Activated CD4-positive, alpha-beta T cell treated with anti-CD3 and anti-CD28 coated beads for 36 hours (primary cell): ENCODE measurements at regions of chr9 and their contacts with region 1.

Region 1: DNA sequence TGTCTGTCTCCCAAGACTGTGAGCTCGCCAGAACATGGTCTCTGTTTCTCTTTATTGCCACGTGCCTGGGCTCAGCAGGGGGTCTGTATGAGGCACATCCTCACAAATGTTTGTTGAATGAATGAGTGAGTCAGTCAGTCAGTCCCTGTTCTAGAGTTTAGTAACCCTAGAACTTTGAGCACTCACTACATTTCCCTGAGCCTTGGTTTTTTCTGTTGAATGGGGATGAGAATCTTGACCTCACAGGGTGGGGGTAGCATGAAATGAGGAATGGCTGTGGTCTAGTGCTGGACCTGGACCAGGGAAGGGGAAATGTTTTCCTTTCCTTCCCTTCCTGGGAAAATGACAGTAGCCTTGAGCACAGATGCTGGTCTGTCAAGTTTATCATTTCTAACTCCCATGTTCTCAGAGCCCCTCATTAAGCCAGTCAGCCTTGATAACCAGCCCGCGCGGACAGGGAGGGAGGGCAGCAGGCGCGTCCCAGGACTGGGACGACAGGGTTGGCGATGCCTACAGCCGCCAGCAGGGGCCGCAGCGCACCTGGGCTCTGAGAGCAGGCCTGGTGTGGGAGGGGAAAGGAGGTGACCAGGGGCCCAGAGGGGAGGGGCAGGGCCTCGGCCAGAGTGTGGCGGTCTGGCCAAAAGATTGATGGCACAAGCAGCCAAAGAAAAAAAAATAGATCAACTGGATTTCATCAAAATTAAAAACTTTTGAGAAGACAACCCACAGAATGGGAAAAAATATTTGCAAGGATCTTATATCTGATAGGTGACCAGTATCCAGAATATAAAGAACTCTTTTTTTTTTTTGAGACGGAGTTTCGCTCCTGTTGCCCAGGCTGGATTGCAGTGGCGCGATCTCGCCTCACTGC is 24.1 kb upstream of the WNK2 start:
- DNase-seq: peak; percentile 86
- ATAC-seq: peak; percentile 68
- H3K4me3 Mint-ChIP-seq: no peak overlapping the region
- H3K27ac Mint-ChIP-seq: no peak overlapping the region
- H3K4me1 Mint-ChIP-seq: peaks cover 26% of the 10 kb centered on the region
- H3K27me3 Mint-ChIP-seq: no peaks in the 10 kb centered on the region

Region 2: GRCh38 chr9:92616655-92617111 is 543.2 kb before region 1 on chr9:
- CTCF ChIA-PET with region 1: no interaction called
- POLR2A ChIA-PET with region 1: no interaction called
- intact Hi-C with region 1: no loop called
- DNase-seq: no peak
- ATAC-seq: no peak
- H3K4me3 Mint-ChIP-seq: no peak overlapping the region
- H3K27ac Mint-ChIP-seq: no peak overlapping the region
- H3K4me1 Mint-ChIP-seq: no peaks in the 10 kb centered on the region
- H3K27me3 Mint-ChIP-seq: no peaks in the 10 kb centered on the region

Region 3: DNA sequence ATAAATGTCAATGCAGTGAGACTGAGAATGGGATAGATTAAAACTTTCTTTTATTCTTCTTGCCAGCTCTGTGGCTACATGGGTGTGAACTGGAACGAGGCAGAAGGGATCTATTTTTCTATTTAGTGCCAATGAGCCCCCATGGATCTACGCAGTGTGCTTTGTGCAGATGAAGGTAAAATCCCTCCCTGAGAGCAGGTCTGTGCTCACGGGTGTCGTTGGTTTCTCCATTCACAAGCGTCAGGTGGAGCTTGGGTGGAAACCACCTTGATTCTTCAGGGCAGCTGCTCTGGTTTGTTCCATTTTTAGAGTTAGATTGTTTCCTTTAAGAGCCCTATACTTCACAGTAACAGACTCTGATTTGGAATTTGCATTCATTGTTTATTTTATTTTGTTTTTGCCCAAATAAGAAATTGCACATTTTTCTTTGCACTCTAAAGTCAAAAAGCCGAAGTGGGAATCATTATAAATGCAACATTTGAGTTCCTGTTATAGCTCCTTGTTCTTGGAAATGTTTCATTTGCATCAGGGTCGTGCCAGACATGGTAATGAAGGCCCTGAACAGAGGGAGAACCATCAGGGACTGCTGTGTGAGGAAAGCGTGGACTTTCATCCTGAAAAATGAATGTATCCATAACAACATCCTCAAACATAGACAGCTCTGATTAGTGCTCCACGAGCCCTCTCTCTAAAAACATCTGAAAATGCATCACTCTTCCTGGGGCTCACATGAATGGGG is 364.1 kb before region 1 on chr9:
- CTCF ChIA-PET with region 1: no interaction called
- POLR2A ChIA-PET with region 1: no interaction called
- intact Hi-C with region 1: no loop called
- DNase-seq: no peak
- ATAC-seq: no peak
- H3K4me3 Mint-ChIP-seq: no peak overlapping the region
- H3K27ac Mint-ChIP-seq: no peak overlapping the region
- H3K4me1 Mint-ChIP-seq: peaks cover 7% of the 10 kb centered on the region
- H3K27me3 Mint-ChIP-seq: peaks cover 17% of the 10 kb centered on the region

Region 4: DNA sequence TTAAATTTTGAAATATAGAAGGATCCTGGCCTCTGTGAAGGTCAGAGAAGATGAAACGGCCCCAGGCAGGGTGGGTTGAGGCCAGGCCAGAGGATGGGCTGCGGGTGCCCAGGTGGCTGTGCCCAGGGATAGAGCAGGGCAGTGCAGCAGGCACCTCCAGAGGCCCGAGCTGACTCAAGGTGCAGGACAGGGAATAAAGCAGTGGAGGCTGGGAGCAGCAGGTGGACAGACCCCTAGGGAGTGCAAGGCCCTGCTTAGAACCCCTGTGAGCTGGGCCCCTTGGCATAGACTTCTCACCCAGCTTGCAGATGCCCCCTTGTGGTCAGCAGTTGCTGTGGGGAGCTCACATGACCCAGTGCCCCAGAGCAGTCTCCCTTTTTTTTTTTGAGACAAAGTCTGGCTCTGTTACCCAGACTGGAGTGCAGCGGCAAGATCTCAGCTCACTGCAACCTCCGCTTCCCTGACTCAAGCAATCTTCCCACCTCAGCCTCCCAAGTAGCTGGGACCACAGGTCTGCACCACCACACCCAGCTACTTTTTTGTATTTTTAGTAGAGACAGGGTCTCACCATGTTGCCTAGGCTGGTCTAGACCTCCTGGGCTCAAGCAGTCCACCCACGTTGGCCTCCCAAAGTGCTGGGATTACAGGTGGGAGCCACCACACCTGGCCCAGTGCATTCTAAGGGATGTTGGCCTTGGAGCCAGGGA is 142.9 kb after region 1 on chr9:
- CTCF ChIA-PET with region 1: no interaction called
- POLR2A ChIA-PET with region 1: no interaction called
- intact Hi-C with region 1: loop called (anchors 1 kb)
- DNase-seq: peak; percentile 78
- ATAC-seq: peak; percentile 88
- H3K4me3 Mint-ChIP-seq: no peak overlapping the region
- H3K27ac Mint-ChIP-seq: no peak overlapping the region
- H3K4me1 Mint-ChIP-seq: no peaks in the 10 kb centered on the region
- H3K27me3 Mint-ChIP-seq: no peaks in the 10 kb centered on the region

Region 5: GRCh38 chr9:93427655-93428379 is 268.0 kb after region 1 on chr9:
- CTCF ChIA-PET with region 1: no interaction called
- POLR2A ChIA-PET with region 1: no interaction called
- intact Hi-C with region 1: loop called in 1 of 2 experiments (anchors 5 kb)
- DNase-seq: peak; percentile 36
- ATAC-seq: no peak
- H3K4me3 Mint-ChIP-seq: no peak overlapping the region
- H3K27ac Mint-ChIP-seq: no peak overlapping the region
- H3K4me1 Mint-ChIP-seq: no peaks in the 10 kb centered on the region
- H3K27me3 Mint-ChIP-seq: peaks cover 9% of the 10 kb centered on the region

Region 6: GRCh38 chr9:93814077-93814956 is 654.5 kb after region 1 on chr9:
- CTCF ChIA-PET with region 1: no interaction called
- POLR2A ChIA-PET with region 1: no interaction called
- intact Hi-C with region 1: no loop called
- DNase-seq: no peak
- ATAC-seq: no peak
- H3K4me3 Mint-ChIP-seq: no peak overlapping the region
- H3K27ac Mint-ChIP-seq: no peak overlapping the region
- H3K4me1 Mint-ChIP-seq: no peaks in the 10 kb centered on the region
- H3K27me3 Mint-ChIP-seq: peaks cover 25% of the 10 kb centered on the region

Region 7: DNA sequence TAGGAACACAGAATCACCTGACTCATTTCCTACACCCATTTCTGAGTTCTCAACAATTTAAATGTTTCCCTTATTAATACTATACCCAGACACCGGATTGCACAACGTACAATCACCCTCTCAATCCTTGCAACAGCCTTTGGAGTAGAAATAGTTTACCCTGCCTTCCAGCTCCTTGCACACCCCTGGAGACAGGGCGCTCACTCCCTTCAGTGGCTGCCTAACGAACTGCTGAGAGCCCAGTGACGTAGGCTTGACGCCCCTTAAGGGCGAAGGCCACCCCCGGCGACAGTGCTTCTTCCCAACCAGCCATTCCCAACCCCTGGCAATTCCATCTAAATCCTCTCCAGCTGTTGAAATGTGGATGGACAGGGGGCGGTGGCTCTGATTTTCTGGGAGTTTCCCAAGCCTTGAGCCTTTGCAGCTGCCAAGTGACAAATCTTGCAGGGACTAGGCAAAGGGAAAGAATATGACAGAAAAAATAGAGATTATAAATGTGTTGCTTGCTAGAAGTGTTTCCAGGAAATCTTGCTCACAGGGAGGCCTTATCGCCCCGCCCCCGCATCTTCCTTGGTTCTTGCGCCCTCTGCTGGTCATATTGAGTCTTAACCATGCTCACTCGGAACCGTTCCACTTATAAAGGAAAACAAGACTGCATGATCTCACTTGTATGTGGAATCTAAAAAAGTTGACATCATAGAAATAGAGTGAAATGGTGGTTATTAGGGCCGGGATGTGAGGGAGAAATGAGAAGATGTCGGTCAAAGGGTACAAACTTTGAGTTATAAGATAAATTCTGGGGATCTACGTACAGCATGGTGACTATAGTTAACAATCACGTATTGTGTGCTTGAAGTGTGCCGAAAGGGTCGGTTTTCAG is 803.0 kb after region 1 on chr9:
- CTCF ChIA-PET with region 1: no interaction called
- POLR2A ChIA-PET with region 1: no interaction called
- intact Hi-C with region 1: loop called in 1 of 2 experiments (anchors 1 kb)
- DNase-seq: peak; percentile 90
- ATAC-seq: peak; percentile 76
- H3K4me3 Mint-ChIP-seq: no peak overlapping the region
- H3K27ac Mint-ChIP-seq: peak overlapping the region; percentile 65
- H3K4me1 Mint-ChIP-seq: peaks cover 26% of the 10 kb centered on the region
- H3K27me3 Mint-ChIP-seq: peaks cover 39% of the 10 kb centered on the region